ENCODE measurements at regions of chr6 and their contacts with region 1.

Region 1: DNA sequence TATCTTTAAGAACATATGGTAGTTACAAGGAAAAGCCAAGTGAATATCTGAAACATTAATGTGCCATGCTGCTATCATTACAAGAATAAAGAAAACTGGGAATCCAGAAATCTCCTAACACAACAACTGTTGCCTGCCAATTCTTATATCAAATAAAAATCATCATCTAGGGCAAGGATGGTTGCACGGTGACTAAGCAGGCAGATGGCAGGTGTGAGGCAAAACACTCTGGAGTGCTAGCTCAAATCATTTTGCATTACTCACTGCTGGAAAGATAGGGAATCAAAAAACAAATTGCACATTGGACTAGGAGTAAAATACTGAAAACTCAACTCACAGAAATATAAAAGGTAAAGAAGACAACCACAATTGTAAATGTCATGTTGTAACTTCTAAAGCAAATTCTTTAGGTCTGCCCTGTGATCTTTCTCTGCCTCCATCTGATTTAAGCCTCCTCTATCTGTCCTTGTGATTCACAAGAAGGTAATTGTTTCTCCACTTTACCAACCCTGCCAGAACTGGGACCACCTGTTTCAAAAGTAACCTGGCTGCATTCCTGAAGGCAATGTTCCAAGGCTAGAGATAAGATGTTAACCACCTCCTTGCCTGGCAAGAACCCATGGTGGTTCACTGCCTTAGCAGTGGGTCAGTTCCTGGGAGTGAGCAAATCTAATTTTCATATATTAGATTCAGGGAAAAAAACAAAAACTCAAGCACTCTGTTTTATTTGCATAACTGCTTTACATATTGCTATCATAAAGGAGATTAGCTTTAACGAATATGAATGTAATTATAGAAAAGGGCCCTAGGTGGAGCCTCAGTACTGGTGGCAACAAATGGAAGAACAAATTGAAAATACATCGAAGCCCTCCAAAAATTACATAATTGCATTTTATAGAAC is 33.1 kb upstream of the LCA5 start:
- DNase-seq: peak; percentile 74
- H3K4me3 ChIP-seq: peak overlapping the region in 1 of 3 experiments; percentile 19
- H3K27ac ChIP-seq: peak overlapping the region; percentile 51
- H3K4me1 ChIP-seq: peaks cover 25% of the 10 kb centered on the region
- H3K27me3 ChIP-seq: no peaks in the 10 kb centered on the region
- CTCF ChIP-seq: peak; percentile 41 to 48
- POLR2A ChIP-seq: no peak

Region 2: GRCh38 chr6:78883651-78884050 is 686.7 kb before region 1 on chr6:
- CTCF ChIA-PET with region 1: no interaction called
- POLR2A ChIA-PET with region 1: no interaction called
- dilution Hi-C with region 1: no loop called
- intact Hi-C with region 1: no loop called
- DNase-seq: no peak
- H3K4me3 ChIP-seq: no peak overlapping the region
- H3K27ac ChIP-seq: no peak overlapping the region
- H3K4me1 ChIP-seq: no peaks in the 10 kb centered on the region
- H3K27me3 ChIP-seq: no peaks in the 10 kb centered on the region
- CTCF ChIP-seq: no peak
- POLR2A ChIP-seq: no peak

Region 3: GRCh38 chr6:79338493-79338892 is 231.9 kb before region 1 on chr6:
- CTCF ChIA-PET with region 1: no interaction called
- POLR2A ChIA-PET with region 1: no interaction called
- dilution Hi-C with region 1: no loop called
- intact Hi-C with region 1: no loop called
- DNase-seq: no peak
- H3K4me3 ChIP-seq: no peak overlapping the region
- H3K27ac ChIP-seq: no peak overlapping the region
- H3K4me1 ChIP-seq: no peaks in the 10 kb centered on the region
- H3K27me3 ChIP-seq: no peaks in the 10 kb centered on the region
- CTCF ChIP-seq: no peak
- POLR2A ChIP-seq: no peak

Region 4: DNA sequence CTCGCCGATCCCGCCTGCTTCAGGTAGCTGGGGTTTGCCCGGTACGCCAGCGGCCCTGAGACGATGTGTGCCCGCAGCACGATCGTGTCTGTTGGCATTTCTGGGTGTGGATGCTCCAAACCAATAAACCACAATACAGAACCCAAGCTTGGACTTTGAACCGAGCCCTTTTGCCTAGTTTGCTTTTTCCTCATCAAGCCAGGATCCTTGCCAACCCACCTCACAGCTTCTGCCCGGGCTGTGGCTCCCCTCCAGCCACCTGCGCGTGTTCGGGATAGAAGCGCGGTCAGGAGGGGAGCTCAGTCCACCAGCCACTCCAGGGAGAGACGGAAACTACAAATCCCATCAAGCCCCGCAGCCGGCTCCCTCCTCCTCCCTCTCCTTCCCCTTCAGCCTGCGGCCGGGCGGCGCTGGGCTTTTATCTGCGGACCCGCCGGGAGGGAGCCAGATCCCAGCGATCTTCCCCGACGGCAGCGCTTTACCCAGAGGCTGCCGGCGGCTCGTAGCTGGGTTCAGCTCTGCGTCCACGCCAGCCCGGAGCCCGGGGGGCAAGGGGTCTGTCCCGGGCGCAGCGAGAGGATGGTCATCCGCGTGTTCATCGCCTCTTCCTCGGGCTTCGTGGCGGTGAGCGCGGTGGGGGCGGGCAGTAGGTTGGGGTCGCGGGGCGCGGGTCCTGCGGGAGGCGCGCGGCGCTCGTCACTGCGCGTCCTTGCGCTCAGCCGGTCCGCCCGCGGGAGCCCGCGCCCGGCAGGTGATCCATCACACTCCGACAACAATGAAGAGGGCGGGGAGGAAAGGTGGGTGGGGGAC is 60.7 kb after region 1 on chr6 and contains the start of gene SH3BGRL2:
- CTCF ChIA-PET with region 1: interaction called, 20 read pairs
- POLR2A ChIA-PET with region 1: no interaction called
- dilution Hi-C with region 1: no loop called
- intact Hi-C with region 1: loop called (anchors 1 kb)
- DNase-seq: peak; percentile 81
- H3K4me3 ChIP-seq: peak within 1 kb of the TSS; percentile 86 to 92 (median 89)
- H3K27ac ChIP-seq: peak within 1 kb of the TSS; percentile 46
- H3K4me1 ChIP-seq: peaks cover 39% of the 10 kb centered on the region
- H3K27me3 ChIP-seq: no peaks in the 10 kb centered on the region
- CTCF ChIP-seq: no peak
- POLR2A ChIP-seq: peak; percentile 49
- total RNA-seq, gene SH3BGRL2: 10.7 and 15.2 TPM in 2 replicates

Region 5: DNA sequence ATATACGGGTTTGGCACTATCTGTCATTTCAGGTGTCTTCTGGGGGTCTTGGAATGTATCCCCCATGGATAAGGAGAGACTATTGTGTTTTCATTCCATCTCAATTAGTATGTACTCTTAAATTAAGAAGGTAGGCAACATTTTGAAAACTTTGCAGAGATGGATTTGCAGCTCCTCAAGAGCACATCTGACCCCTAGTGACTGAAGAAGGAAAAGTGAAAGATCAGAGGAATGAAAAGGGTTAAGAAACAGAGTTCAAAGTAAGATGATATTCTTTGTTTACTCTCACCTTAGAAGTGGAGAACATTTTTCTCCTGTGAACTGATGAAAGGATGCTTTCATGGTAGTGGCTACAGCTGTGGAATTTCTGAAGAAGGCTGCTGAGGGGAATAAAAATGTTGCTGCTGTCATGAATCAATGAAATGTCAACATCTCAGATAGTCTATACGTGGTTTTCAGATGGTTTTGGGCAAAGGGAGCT is 102.3 kb after region 1 on chr6:
- CTCF ChIA-PET with region 1: interaction called, 103 read pairs
- POLR2A ChIA-PET with region 1: no interaction called
- dilution Hi-C with region 1: no loop called
- intact Hi-C with region 1: loop called (anchors 1 kb)
- DNase-seq: peak; percentile 68
- H3K4me3 ChIP-seq: no peak overlapping the region
- H3K27ac ChIP-seq: peak overlapping the region; percentile 39
- H3K4me1 ChIP-seq: peaks cover 29% of the 10 kb centered on the region
- H3K27me3 ChIP-seq: no peaks in the 10 kb centered on the region
- CTCF ChIP-seq: peak; percentile 39 to 48
- POLR2A ChIP-seq: no peak

Region 6: GRCh38 chr6:79756496-79756895 is 186.1 kb after region 1 on chr6:
- CTCF ChIA-PET with region 1: interaction called, 8 read pairs
- POLR2A ChIA-PET with region 1: no interaction called
- dilution Hi-C with region 1: no loop called
- intact Hi-C with region 1: loop called (anchors 5 kb)
- DNase-seq: peak; percentile 43
- H3K4me3 ChIP-seq: no peak overlapping the region
- H3K27ac ChIP-seq: peak overlapping the region; percentile 30
- H3K4me1 ChIP-seq: peaks cover 26% of the 10 kb centered on the region
- H3K27me3 ChIP-seq: no peaks in the 10 kb centered on the region
- CTCF ChIP-seq: no peak
- POLR2A ChIP-seq: no peak

Region 7: GRCh38 chr6:79869600-79870084 is 299.3 kb after region 1 on chr6:
- CTCF ChIA-PET with region 1: interaction called, 26 read pairs
- POLR2A ChIA-PET with region 1: no interaction called
- dilution Hi-C with region 1: no loop called
- intact Hi-C with region 1: loop called (anchors 1 kb)
- DNase-seq: peak; percentile 64
- H3K4me3 ChIP-seq: no peak overlapping the region
- H3K27ac ChIP-seq: no peak overlapping the region
- H3K4me1 ChIP-seq: no peaks in the 10 kb centered on the region
- H3K27me3 ChIP-seq: peaks cover 7% of the 10 kb centered on the region in 2 experiments
- CTCF ChIP-seq: peak; percentile 92 to 99
- POLR2A ChIP-seq: no peak

Measured in endothelial cell of umbilical vein (primary cell).